Heart left ventricle (tissue), 16 donors: ENCODE measurements at regions of chr5 and their contacts with region 1.

Region 1: GRCh38 chr5:66595756-66596635 is at the start of gene MAST4:
- DNase-seq: peak; percentile 92 to 95 (median 94)
- ATAC-seq: peak; percentile 93 to 97 (median 95)
- H3K4me3 ChIP-seq: peak within 1 kb of the TSS; percentile 69 to 97 (median 82)
- H3K27ac ChIP-seq: peak within 1 kb of the TSS; percentile 41 to 88 (median 71)
- H3K4me1 ChIP-seq: peaks cover 0 to 36% (median 12%) of the 10 kb centered on the region in 12 donors
- H3K27me3 ChIP-seq: peaks cover 0 to 41% (median 0%) of the 10 kb centered on the region in 9 donors
- CTCF ChIP-seq: no peak
- POLR2A ChIP-seq: peak; percentile 89 to 97
- total RNA-seq, gene MAST4: 54.9 to 96.2 (median 70.0) TPM

Region 2: DNA sequence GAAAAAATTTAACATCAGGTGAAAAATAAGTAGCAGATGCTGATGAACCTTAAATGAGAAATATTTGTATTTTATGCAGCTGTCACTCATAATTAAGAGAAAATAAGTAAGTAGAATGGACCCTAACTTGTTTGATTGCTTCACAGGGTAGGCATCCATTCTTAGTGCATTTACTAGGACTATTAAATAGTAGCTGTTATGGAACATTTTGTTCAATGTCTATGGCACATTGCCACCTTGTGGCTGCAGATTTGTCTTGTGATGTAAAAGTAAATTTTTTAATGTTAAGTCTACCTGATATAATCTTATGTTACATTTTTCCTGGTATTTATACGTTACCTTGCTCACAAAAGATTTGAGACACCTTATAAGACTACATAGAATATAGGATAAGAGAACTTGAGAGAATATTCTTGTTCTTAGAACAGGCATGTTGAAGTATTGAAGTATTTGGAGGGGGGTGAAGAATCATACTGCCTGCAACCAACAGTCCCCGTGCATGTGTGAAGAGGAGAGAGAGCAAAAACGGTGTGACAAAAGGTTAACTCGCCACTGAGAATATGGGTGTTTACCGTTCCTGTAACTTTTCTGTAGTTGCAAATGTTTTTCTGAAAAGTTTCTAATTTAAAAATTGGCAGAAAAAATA is 161.3 kb after region 1 on chr5:
- intact Hi-C with region 1: loop called in 1 of 10 experiments (anchors 5 kb)
- DNase-seq: peak in 4 of 5 donors; percentile 35 to 56 (median 41)
- ATAC-seq: peak in 3 of 4 donors; percentile 59 to 77 (median 72)
- H3K4me3 ChIP-seq: no peak overlapping the region
- H3K27ac ChIP-seq: no peak overlapping the region
- H3K4me1 ChIP-seq: peaks cover 0 to 24% (median 7%) of the 10 kb centered on the region in 12 donors
- H3K27me3 ChIP-seq: no peaks in the 10 kb centered on the region
- CTCF ChIP-seq: peak; percentile 32 to 71 (median 54)
- POLR2A ChIP-seq: no peak